MCF 10A (cell line): ENCODE measurements at regions of chr1 and their contacts with region 1.

Region 1: DNA sequence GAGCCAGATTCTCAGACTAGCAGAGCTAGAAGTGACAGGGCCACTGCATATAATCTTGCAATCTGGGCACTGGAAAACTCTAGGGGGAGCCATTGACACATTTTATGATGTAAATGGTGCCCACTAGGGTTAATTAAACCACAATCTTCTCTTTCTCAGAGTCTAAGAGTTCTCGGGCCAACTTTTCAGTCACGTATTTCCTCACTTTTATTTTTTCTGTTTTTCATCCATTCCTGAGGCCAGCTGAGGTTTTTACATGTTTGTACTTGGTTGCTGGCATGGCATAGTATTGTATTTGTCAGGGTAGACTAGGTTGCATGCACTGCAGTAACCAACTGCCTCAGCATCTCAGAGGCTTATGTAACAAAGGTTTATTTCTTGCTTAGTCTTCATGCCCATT is 138.2 kb downstream of the ZNF326 start:
- DNase-seq: peak; percentile 77
- H3K4me3 Mint-ChIP-seq: no peak overlapping the region
- H3K27ac Mint-ChIP-seq: no peak overlapping the region
- H3K4me1 Mint-ChIP-seq: no peaks in the 10 kb centered on the region
- H3K27me3 Mint-ChIP-seq: peaks cover 18% of the 10 kb centered on the region
- CTCF ChIP-seq: peak; percentile 74

Region 2: GRCh38 chr1:89873770-89874169 is 259.4 kb before region 1 on chr1:
- CTCF ChIA-PET with region 1: no interaction called
- POLR2A ChIA-PET with region 1: no interaction called
- intact Hi-C with region 1: no loop called
- DNase-seq: no peak
- H3K4me3 Mint-ChIP-seq: no peak overlapping the region
- H3K27ac Mint-ChIP-seq: no peak overlapping the region
- H3K4me1 Mint-ChIP-seq: no peaks in the 10 kb centered on the region
- H3K27me3 Mint-ChIP-seq: no peaks in the 10 kb centered on the region
- CTCF ChIP-seq: no peak

Region 3: GRCh38 chr1:90143522-90144050 is 10.5 kb after region 1 on chr1:
- CTCF ChIA-PET with region 1: interaction called, 10 read pairs
- POLR2A ChIA-PET with region 1: no interaction called
- intact Hi-C with region 1: no loop called
- DNase-seq: no peak
- H3K4me3 Mint-ChIP-seq: no peak overlapping the region
- H3K27ac Mint-ChIP-seq: no peak overlapping the region
- H3K4me1 Mint-ChIP-seq: no peaks in the 10 kb centered on the region
- H3K27me3 Mint-ChIP-seq: no peaks in the 10 kb centered on the region
- CTCF ChIP-seq: no peak

Region 4: GRCh38 chr1:90291431-90292216 is 158.5 kb after region 1 on chr1:
- CTCF ChIA-PET with region 1: interaction called, 3 read pairs
- POLR2A ChIA-PET with region 1: no interaction called
- intact Hi-C with region 1: loop called (anchors 10 kb)
- DNase-seq: no peak
- H3K4me3 Mint-ChIP-seq: no peak overlapping the region
- H3K27ac Mint-ChIP-seq: no peak overlapping the region
- H3K4me1 Mint-ChIP-seq: no peaks in the 10 kb centered on the region
- H3K27me3 Mint-ChIP-seq: peaks cover 12% of the 10 kb centered on the region
- CTCF ChIP-seq: no peak

Region 5: DNA sequence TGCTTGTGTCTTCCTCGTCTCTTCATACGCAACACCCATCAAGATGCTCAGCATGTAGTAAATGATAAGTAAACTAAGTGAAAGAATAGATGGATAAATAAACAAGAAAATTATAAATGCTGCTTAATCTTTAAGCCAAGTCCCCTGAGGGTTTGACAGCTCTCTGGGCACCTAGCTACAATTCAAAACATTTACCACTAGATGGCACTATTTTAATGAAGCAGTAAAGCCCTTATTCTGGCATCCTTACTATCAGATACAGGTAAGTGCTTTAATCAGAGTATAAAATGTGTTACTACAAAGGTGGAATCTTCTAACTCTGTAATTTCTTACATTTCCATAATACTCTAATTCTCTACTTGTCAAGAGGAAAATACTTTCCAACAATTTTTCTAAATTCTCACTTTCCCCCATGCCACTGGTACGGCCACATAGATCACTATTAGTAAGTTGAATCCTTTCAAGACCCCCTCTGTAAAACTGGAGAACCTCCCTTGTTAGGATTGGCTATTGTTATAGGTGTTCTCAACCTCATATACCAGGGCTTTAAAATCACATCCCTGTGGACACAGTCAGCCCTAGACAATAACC is 446.2 kb after region 1 on chr1:
- CTCF ChIA-PET with region 1: interaction called, 6 read pairs
- POLR2A ChIA-PET with region 1: no interaction called
- intact Hi-C with region 1: loop called (anchors 2 kb)
- DNase-seq: peak; percentile 48
- H3K4me3 Mint-ChIP-seq: no peak overlapping the region
- H3K27ac Mint-ChIP-seq: no peak overlapping the region
- H3K4me1 Mint-ChIP-seq: peaks cover 8% of the 10 kb centered on the region
- H3K27me3 Mint-ChIP-seq: no peaks in the 10 kb centered on the region
- CTCF ChIP-seq: peak; percentile 41

Region 6: DNA sequence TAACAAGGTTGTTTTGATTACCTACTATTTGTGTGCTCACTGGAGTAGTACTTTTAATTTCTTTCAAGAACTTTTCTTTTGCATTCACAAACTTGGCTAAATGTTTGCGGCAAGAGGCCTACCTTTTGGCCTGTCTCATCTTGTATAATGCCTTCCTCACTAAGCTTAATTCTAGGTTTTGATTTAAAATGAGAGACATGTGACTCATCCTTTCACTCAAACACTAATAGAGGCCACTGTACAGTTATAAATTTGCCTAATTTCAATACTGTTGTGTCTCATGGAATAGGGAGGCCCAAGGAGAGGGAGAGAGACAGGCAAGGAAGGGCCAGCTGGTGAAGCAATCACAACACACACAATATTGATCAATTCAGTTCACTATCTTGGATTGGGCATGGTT is 822.6 kb after region 1 on chr1:
- CTCF ChIA-PET with region 1: no interaction called
- POLR2A ChIA-PET with region 1: interaction called, 3 read pairs
- intact Hi-C with region 1: loop called (anchors 5 kb)
- DNase-seq: no peak
- H3K4me3 Mint-ChIP-seq: no peak overlapping the region
- H3K27ac Mint-ChIP-seq: no peak overlapping the region
- H3K4me1 Mint-ChIP-seq: peaks cover 48% of the 10 kb centered on the region
- H3K27me3 Mint-ChIP-seq: no peaks in the 10 kb centered on the region
- CTCF ChIP-seq: no peak